Body of pancreas (tissue), 4 donors: ENCODE measurements at regions of chr9 and their contacts with region 1.

Region 1: GRCh38 chr9:109903515-109904138 is 123.6 kb downstream of the PALM2AKAP2 start:
- DNase-seq: peak; percentile 55 to 79 (median 69)
- ATAC-seq: peak; percentile 66
- H3K4me3 ChIP-seq: no peak overlapping the region
- H3K27ac ChIP-seq: no peak overlapping the region
- H3K4me1 ChIP-seq: no peaks in the 10 kb centered on the region
- H3K27me3 ChIP-seq: no peaks in the 10 kb centered on the region
- CTCF ChIP-seq: peak; percentile 50 to 92 (median 75)
- POLR2A ChIP-seq: no peak

Region 2: GRCh38 chr9:109843641-109844040 is 60.0 kb before region 1 on chr9:
- intact Hi-C with region 1: no loop called
- DNase-seq: peak in 3 of 4 donors; percentile 22 to 48 (median 25)
- ATAC-seq: no peak
- H3K4me3 ChIP-seq: no peak overlapping the region
- H3K27ac ChIP-seq: no peak overlapping the region
- H3K4me1 ChIP-seq: no peaks in the 10 kb centered on the region
- H3K27me3 ChIP-seq: no peaks in the 10 kb centered on the region
- CTCF ChIP-seq: no peak
- POLR2A ChIP-seq: no peak

Region 3: GRCh38 chr9:110058304-110058953 is 154.8 kb after region 1 on chr9:
- intact Hi-C with region 1: loop called (anchors 5 kb)
- DNase-seq: peak; percentile 25 to 61 (median 45)
- ATAC-seq: peak; percentile 55
- H3K4me3 ChIP-seq: no peak overlapping the region
- H3K27ac ChIP-seq: no peak overlapping the region
- H3K4me1 ChIP-seq: peaks cover 3% of the 10 kb centered on the region
- H3K27me3 ChIP-seq: no peaks in the 10 kb centered on the region
- CTCF ChIP-seq: peak; percentile 30 to 68 (median 50)
- POLR2A ChIP-seq: no peak

Region 4: GRCh38 chr9:110148384-110148783 is 244.8 kb after region 1 on chr9:
- intact Hi-C with region 1: loop called (anchors 10 kb)
- DNase-seq: no peak
- ATAC-seq: no peak
- H3K4me3 ChIP-seq: no peak overlapping the region
- H3K27ac ChIP-seq: no peak overlapping the region
- H3K4me1 ChIP-seq: peaks cover 13% of the 10 kb centered on the region
- H3K27me3 ChIP-seq: no peaks in the 10 kb centered on the region
- CTCF ChIP-seq: no peak
- POLR2A ChIP-seq: no peak

Region 5: GRCh38 chr9:110303133-110303532 is 399.5 kb after region 1 on chr9:
- intact Hi-C with region 1: no loop called
- DNase-seq: no peak
- ATAC-seq: no peak
- H3K4me3 ChIP-seq: no peak overlapping the region
- H3K27ac ChIP-seq: no peak overlapping the region
- H3K4me1 ChIP-seq: no peaks in the 10 kb centered on the region
- H3K27me3 ChIP-seq: no peaks in the 10 kb centered on the region
- CTCF ChIP-seq: no peak
- POLR2A ChIP-seq: no peak